Activated CD8-positive, alpha-beta T cell treated with anti-CD3 and anti-CD28 coated beads, Interleukin-2, amount 10 ng/mL, durations not matched to agents 7 days and 5 days (primary cell): ENCODE measurements at regions of chr11 and their contacts with region 1.

Region 1: GRCh38 chr11:10540923-10541560 is at the start of gene RNF141:
- DNase-seq: peak; percentile 96
- ATAC-seq: peak; percentile 97
- H3K4me3 Mint-ChIP-seq: peak within 1 kb of the TSS; percentile 90
- H3K27ac Mint-ChIP-seq: peak within 1 kb of the TSS; percentile 79
- H3K4me1 Mint-ChIP-seq: peaks cover 22% of the 10 kb centered on the region
- H3K27me3 Mint-ChIP-seq: peaks cover 4% of the 10 kb centered on the region
- total RNA-seq, gene RNF141: 10.7 to 11.6 TPM

Region 2: DNA sequence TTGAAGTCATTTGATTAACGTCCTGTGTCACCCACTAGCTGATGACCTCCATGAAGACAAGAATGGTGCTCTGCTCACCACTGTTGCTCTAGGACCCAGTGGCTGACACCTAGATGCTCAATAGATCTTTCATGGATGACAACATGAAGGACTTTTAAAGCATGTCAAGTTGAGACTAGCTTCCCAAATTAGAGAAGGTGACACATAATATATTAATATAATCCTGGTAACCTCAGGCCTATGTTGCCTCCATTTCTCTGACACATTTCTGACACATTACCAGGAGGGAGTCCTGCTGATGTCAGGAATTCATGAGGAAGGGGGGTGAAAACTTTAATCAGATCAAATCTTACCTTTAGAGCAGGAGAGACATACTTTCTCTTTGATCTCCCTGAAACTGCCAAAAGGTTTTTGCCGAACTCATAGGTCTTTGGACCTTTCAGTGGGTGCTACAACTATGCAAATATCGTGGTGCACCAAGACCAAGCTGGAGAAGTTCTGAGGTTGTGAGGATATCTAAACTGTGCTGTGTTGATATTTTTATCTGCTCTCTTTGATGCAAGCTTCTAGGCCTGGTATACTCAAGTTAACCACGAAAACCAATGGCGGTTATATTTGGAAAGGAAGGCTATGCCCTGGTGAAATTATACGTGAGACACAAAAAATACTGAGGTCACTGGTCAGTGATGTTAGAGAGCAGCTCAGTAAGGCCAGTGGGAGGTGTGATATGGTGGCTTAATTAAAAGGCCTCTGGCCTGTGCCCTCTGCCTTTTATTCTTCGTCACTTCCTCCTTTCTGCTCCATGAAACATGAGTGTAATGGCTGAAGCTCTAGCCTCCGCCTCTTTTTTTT is 99.2 kb before region 1 on chr11:
- CTCF ChIA-PET with region 1: interaction called, 20 read pairs
- POLR2A ChIA-PET with region 1: no interaction called
- DNase-seq: peak; percentile 68
- ATAC-seq: peak; percentile 90
- H3K4me3 Mint-ChIP-seq: peak overlapping the region; percentile 28
- H3K27ac Mint-ChIP-seq: peak overlapping the region; percentile 70
- H3K4me1 Mint-ChIP-seq: peaks cover 41% of the 10 kb centered on the region
- H3K27me3 Mint-ChIP-seq: peaks cover 38% of the 10 kb centered on the region

Region 3: GRCh38 chr11:10490398-10491241 is 50.4 kb before region 1 on chr11:
- CTCF ChIA-PET with region 1: interaction called, 11 read pairs
- POLR2A ChIA-PET with region 1: no interaction called
- DNase-seq: no peak
- ATAC-seq: no peak
- H3K4me3 Mint-ChIP-seq: no peak overlapping the region
- H3K27ac Mint-ChIP-seq: peak overlapping the region; percentile 23
- H3K4me1 Mint-ChIP-seq: peaks cover 11% of the 10 kb centered on the region
- H3K27me3 Mint-ChIP-seq: no peaks in the 10 kb centered on the region

Region 4: DNA sequence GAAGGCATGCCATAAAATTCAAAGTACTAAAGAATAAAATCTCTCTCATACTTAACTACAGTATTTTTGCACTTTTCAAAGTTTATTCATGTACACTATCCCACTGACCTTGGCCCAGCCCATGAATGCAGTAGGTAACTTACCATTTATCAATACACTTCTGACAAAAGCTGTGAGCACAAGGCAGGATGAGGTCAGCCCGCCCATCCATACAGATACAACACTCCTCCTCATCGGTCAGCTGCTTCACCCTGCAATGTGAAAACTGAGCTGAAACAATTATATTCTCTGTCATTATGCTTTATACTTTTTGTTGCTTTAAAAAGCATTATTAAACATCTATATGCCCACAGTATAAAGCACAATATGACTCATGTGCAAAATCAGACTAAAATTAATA is 22.2 kb before region 1 on chr11:
- CTCF ChIA-PET with region 1: interaction called, 18 read pairs
- POLR2A ChIA-PET with region 1: interaction called, 4 read pairs
- DNase-seq: no peak
- ATAC-seq: no peak
- H3K4me3 Mint-ChIP-seq: no peak overlapping the region
- H3K27ac Mint-ChIP-seq: no peak overlapping the region
- H3K4me1 Mint-ChIP-seq: no peaks in the 10 kb centered on the region
- H3K27me3 Mint-ChIP-seq: no peaks in the 10 kb centered on the region

Region 5: DNA sequence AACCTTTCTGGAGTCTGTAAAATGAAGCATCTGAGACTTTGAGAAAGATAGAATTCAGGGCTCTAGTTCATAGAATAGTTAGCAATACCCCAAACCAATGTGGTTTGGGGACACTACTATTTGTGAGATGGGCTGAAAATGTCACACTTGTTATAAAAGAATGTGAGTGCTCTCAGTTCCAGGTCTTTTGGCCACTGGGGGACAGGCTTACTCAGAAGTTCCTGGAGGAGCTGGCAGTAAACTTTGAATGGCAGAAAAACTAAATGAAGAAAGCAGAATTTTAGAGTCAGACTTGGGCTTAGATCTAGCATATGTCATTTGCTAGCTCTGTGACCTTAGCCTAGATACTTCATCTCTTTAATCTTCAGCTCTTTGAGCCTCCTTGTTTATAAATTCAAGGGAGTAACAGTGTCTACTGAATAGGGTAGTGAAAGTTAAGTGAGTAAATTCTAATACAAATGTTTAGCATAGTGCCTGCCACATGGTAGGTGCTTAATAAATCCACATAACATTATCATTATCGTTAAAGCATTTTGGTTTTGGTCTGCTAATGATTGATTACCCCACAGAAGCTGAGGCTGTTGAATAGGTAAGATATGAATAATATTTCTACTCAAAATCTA is 23.8 kb after region 1 on chr11:
- CTCF ChIA-PET with region 1: interaction called, 26 read pairs
- POLR2A ChIA-PET with region 1: no interaction called
- DNase-seq: no peak
- ATAC-seq: no peak
- H3K4me3 Mint-ChIP-seq: no peak overlapping the region
- H3K27ac Mint-ChIP-seq: no peak overlapping the region
- H3K4me1 Mint-ChIP-seq: no peaks in the 10 kb centered on the region
- H3K27me3 Mint-ChIP-seq: peaks cover 12% of the 10 kb centered on the region

Region 6: GRCh38 chr11:10680956-10681487 is 140.0 kb after region 1 on chr11:
- CTCF ChIA-PET with region 1: no interaction called
- POLR2A ChIA-PET with region 1: no interaction called
- DNase-seq: no peak
- ATAC-seq: no peak
- H3K4me3 Mint-ChIP-seq: no peak overlapping the region
- H3K27ac Mint-ChIP-seq: no peak overlapping the region
- H3K4me1 Mint-ChIP-seq: no peaks in the 10 kb centered on the region
- H3K27me3 Mint-ChIP-seq: peaks cover 16% of the 10 kb centered on the region

Region 7: GRCh38 chr11:10725114-10725906 is 184.3 kb after region 1 on chr11:
- CTCF ChIA-PET with region 1: no interaction called
- POLR2A ChIA-PET with region 1: no interaction called
- DNase-seq: no peak
- ATAC-seq: peak; percentile 68
- H3K4me3 Mint-ChIP-seq: no peak overlapping the region
- H3K27ac Mint-ChIP-seq: no peak overlapping the region
- H3K4me1 Mint-ChIP-seq: peaks cover 29% of the 10 kb centered on the region
- H3K27me3 Mint-ChIP-seq: peaks cover 15% of the 10 kb centered on the region